Calu3 (cell line): ENCODE measurements at regions of chr12 and their contacts with region 1.

Region 1: GRCh38 chr12:19915392-19916195 is 452.7 kb upstream of the PDE3A start:
- DNase-seq: peak; percentile 32
- H3K4me3 Mint-ChIP-seq: no peak overlapping the region
- H3K27ac Mint-ChIP-seq: peak overlapping the region; percentile 41
- H3K4me1 Mint-ChIP-seq: peaks cover 44% of the 10 kb centered on the region
- H3K27me3 Mint-ChIP-seq: no peaks in the 10 kb centered on the region
- CTCF ChIP-seq: peak; percentile 63

Region 2: GRCh38 chr12:19273482-19274330 is 641.9 kb before region 1 on chr12:
- CTCF ChIA-PET with region 1: no interaction called
- intact Hi-C with region 1: no loop called
- DNase-seq: peak; percentile 81
- H3K4me3 Mint-ChIP-seq: peak overlapping the region; percentile 19
- H3K27ac Mint-ChIP-seq: peak overlapping the region; percentile 6
- H3K4me1 Mint-ChIP-seq: peaks cover 27% of the 10 kb centered on the region
- H3K27me3 Mint-ChIP-seq: no peaks in the 10 kb centered on the region
- CTCF ChIP-seq: no peak

Region 3: DNA sequence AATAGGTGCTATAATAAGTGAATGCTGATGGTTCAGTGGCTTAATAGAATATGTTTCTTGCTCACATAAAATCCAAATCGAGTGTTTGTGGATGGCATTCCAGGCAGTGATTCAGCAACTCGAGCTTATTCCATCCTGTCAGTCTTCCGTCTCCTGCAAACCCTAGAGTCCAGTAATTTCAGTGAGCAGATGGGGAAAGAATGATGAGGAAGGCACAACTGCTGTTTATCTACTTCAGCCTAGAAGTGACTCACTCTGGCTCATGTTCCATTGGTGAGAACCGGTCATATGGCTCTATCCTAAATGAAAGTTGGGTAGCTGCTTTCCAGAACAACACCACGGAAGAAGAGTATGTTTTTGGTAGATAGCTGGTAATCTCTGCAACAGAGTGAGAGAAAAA is 31.0 kb after region 1 on chr12:
- CTCF ChIA-PET with region 1: no interaction called
- intact Hi-C with region 1: no loop called
- DNase-seq: peak; percentile 15
- H3K4me3 Mint-ChIP-seq: no peak overlapping the region
- H3K27ac Mint-ChIP-seq: no peak overlapping the region
- H3K4me1 Mint-ChIP-seq: peaks cover 10% of the 10 kb centered on the region
- H3K27me3 Mint-ChIP-seq: no peaks in the 10 kb centered on the region
- CTCF ChIP-seq: no peak

Region 4: DNA sequence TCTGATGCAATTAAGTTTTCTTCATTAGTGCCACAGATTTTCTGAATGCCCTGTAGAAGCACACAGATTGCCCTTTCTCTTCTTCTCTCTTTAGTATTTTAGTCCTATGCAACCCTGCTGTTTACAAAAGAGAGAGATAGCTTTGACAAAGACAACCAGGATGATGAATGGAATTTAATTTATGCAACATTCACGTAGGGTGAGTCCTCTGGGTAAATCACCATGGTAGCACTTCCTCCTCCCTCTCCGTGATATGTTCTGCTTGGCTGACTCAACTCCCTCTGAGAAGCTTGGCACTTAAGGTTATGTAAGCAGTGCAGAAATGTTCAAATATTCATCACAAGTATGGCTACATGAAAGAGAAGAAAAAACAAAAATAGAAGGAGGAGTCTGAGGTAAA is 51.9 kb after region 1 on chr12:
- CTCF ChIA-PET with region 1: interaction called, 10 read pairs
- intact Hi-C with region 1: loop called (anchors 2 kb)
- DNase-seq: peak; percentile 49
- H3K4me3 Mint-ChIP-seq: peak overlapping the region; percentile 35
- H3K27ac Mint-ChIP-seq: peak overlapping the region; percentile 95
- H3K4me1 Mint-ChIP-seq: peaks cover 47% of the 10 kb centered on the region
- H3K27me3 Mint-ChIP-seq: no peaks in the 10 kb centered on the region
- CTCF ChIP-seq: no peak

Region 5: DNA sequence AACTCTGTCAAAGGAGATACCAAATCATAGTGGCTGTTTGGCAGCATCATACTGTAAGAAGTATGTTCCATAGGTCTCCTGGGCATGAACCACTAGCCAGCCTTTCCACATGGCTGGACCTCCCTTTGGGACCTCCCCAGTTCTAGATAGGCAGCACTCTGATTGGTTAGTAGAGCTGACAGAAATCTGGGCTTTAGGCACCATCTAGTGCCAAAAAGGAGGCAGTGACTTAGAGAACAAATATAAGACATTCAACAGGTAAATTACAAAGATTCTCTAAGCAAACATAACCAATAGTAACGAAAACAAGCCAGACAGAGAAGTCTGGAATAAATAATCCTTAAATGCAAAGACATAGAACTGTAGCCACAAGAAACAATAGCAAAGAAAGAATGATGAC is 304.7 kb after region 1 on chr12:
- CTCF ChIA-PET with region 1: no interaction called
- intact Hi-C with region 1: loop called (anchors 1 kb)
- DNase-seq: peak; percentile 5
- H3K4me3 Mint-ChIP-seq: no peak overlapping the region
- H3K27ac Mint-ChIP-seq: no peak overlapping the region
- H3K4me1 Mint-ChIP-seq: no peaks in the 10 kb centered on the region
- H3K27me3 Mint-ChIP-seq: no peaks in the 10 kb centered on the region
- CTCF ChIP-seq: no peak

Region 6: GRCh38 chr12:20376984-20377383 is 461.4 kb after region 1 on chr12:
- CTCF ChIA-PET with region 1: interaction called, 4 read pairs
- intact Hi-C with region 1: loop called (anchors 2 kb)
- DNase-seq: peak; percentile 24
- H3K4me3 Mint-ChIP-seq: no peak overlapping the region
- H3K27ac Mint-ChIP-seq: no peak overlapping the region
- H3K4me1 Mint-ChIP-seq: peaks cover 36% of the 10 kb centered on the region
- H3K27me3 Mint-ChIP-seq: no peaks in the 10 kb centered on the region
- CTCF ChIP-seq: no peak